Activated CD4-positive, alpha-beta memory T cell treated with anti-CD3 and anti-CD28 coated beads, Interleukin-2, amount 10 ng/mL, durations not matched to agents 7 days and 5 days (primary cell): ENCODE measurements at regions of chr16 and their contacts with region 1.

Region 1: DNA sequence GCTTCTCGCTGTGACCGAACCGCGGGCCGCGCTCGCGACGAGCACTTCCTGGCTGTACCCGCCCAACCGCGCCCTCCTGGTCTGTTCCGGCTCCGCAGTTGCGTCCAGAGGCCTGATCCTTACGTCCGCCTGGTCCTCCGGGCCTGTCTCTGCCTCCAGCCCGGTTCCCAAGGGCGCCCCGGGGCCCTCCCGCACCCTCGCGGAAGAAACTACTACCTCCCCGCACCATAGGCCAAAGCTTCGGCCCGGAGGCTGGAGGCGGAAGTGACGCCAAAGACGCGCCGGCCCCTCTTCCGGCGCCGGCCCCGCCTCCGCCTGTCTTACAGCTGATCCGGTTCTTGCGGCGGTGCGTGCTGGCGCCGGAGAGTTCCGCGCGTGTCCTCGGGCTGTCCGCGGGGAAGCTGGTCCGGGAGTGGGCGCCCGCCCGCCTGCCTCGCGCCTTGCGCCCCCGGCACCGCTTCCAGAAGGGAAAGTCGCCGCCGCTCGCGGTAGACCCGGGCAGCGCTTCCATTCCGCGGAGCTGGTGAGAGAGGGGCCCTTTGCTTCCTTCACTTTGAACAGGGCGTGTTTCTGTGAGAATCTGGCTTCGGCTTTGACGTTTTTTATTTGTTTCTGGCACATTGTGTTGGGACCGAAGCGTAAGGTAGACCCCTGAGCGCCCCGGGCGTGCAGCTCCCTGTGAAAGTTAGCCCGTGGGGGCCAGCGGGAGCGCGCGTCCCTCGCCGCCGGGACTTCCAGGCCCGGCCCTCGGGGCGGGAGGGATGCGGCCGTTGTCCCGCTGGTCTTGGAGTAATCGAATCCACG is at the start of gene ZNF778:
- DNase-seq: peak; percentile 85
- H3K4me3 Mint-ChIP-seq: peak within 1 kb of the TSS; percentile 89
- H3K27ac Mint-ChIP-seq: peak within 1 kb of the TSS; percentile 75
- H3K4me1 Mint-ChIP-seq: peaks cover 24% of the 10 kb centered on the region
- H3K27me3 Mint-ChIP-seq: no peaks in the 10 kb centered on the region
- total RNA-seq, gene ZNF778: 6.6 to 6.8 TPM

Region 2: DNA sequence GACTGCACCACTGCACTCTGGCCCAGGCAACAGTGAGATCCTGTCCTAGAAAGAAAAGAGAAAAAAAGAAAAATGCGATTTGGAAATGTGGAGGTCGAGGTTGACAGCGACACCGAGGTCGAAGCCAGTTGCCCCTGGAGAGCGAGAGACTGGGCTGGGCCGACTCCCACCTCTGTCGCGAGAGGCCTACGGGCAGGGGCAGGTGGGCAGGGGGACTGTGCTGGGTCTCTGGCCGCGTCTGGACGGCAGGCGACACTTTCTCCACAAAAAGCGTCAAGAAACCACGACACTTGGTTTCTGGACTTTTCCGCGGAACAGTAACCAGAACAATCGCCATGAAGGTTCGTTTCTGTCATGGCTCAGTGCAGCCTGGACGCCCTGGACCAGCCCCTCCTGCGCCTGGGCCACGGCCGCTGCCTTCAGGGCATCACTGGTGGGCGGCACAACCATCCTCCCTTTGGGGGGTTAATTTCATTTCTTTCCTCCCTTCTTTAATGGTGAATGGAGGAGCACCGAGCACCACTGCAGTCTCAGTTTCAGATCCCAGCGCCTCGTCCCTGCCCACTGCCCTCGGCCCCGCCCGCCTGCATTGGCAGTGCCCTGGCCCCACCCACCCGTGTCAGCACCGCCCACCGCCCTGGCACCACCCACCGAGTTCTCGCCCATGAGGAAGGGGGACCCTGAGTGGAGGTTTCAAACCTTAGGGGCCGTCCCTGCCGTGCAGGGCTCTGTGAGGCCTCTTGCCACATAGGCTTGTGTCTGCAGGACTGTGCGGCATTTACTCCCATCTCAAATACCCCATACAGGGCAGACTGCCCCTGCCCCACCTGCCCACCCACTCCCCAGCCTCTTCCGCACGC is 64.5 kb before region 1 on chr16:
- CTCF ChIA-PET with region 1: no interaction called
- POLR2A ChIA-PET with region 1: no interaction called
- DNase-seq: no peak
- H3K4me3 Mint-ChIP-seq: no peak overlapping the region
- H3K27ac Mint-ChIP-seq: no peak overlapping the region
- H3K4me1 Mint-ChIP-seq: no peaks in the 10 kb centered on the region
- H3K27me3 Mint-ChIP-seq: no peaks in the 10 kb centered on the region

Region 3: DNA sequence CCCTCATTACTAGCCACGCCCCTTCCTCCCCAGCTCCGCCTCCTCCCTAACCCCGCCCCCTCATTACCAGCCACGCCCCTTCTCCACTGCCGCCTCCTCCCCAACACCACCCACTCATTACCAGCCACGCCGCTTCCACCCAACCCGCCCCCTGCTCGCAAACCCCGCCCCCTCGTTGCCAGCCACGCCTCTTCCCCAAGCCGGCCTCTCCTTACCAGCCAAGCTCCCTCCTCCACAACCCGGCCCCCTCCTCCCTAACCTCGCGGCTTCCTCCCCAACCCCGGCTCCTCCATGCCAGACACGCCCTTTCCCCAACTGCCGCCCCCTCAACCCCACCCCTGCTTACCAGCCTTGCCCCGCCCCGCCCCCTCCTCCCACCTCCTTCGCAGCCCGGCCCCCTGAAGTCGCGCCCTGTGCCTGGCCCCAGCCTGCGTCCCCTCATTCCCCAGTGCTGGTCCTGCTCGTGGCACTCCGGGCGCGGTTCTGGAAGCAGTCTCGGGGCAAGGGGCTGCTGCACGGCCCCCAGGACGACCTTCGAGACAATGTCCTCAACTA is 24.5 kb before region 1 on chr16:
- CTCF ChIA-PET with region 1: no interaction called
- POLR2A ChIA-PET with region 1: no interaction called
- DNase-seq: peak; percentile 48
- H3K4me3 Mint-ChIP-seq: no peak overlapping the region
- H3K27ac Mint-ChIP-seq: no peak overlapping the region
- H3K4me1 Mint-ChIP-seq: no peaks in the 10 kb centered on the region
- H3K27me3 Mint-ChIP-seq: peaks cover 3% of the 10 kb centered on the region

Region 4: DNA sequence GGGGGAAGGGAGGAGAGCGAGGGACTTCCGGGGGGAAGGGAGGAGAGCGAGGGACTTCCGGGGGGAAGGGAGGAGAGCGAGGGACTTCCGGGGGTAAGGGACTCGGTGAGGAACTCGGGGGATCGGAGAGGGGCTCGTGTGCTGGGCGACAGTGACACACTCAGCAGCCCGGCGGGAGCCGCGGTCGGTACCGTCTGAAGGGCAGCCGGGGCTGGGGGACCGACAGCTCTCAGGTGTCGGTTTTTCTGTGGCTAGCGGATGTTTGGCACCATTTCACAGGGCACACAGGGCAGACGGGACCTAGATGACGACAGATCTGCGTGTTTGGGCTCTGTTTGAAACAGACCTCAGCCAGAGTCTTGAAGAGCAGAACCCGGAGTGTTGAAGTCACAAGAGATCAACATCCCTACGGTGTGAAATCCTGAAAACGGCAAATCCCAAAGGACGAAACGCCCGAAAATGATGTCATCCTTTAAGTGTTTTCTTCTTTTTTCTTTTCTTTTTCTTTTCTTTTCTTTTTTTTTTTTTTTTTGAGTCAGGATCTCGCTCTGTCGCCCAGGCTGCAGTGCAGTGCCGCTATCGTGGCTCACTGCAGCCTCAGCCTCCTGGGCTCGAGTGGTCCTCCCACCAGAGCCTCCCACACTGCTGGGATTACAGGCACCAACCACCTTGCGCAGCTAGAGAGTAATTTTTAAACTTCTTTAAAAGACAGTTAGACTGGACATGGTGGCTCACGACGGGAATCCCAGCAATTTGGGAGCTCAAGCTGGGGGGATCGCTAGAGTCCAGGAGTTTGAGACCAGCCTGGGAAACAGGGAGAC is 23.8 kb after region 1 on chr16:
- CTCF ChIA-PET with region 1: interaction called, 11 read pairs
- POLR2A ChIA-PET with region 1: interaction called, 21 read pairs
- DNase-seq: peak; percentile 81
- H3K4me3 Mint-ChIP-seq: peak overlapping the region; percentile 96
- H3K27ac Mint-ChIP-seq: peak overlapping the region; percentile 98
- H3K4me1 Mint-ChIP-seq: peaks cover 24% of the 10 kb centered on the region
- H3K27me3 Mint-ChIP-seq: no peaks in the 10 kb centered on the region